ENCODE measurements at regions of chr9 and their contacts with region 1.

Region 1: DNA sequence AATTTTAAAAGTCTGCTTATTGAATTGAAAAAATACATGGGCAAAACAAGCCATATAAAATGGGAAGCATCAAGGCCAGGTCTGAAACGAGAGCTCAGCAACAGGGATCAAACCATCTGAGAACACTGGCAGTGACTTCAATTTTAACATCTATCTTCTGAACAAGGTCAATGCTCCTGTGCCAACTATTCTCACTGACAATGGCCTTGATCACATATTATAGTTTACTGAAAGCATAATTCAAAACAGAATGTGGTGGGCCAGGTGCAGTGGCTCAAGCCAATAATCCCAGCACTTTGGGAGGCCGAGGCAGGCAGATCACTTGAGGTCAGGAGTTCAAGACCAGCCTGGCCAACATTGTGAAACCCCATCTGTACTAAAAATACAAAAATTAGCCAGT is 9.0 kb downstream of the ECPAS start:
- DNase-seq: no peak
- ATAC-seq: peak; percentile 39 to 64 (median 46)
- H3K4me3 ChIP-seq: peak overlapping the region; percentile 29
- H3K27ac ChIP-seq: peak overlapping the region; percentile 47
- H3K4me1 ChIP-seq: peaks cover 91% of the 10 kb centered on the region
- H3K27me3 ChIP-seq: no peaks in the 10 kb centered on the region
- CTCF ChIP-seq: no peak

Region 2: GRCh38 chr9:111440226-111440625 is 35.0 kb before region 1 on chr9:
- intact Hi-C with region 1: loop called (anchors 5 kb)
- DNase-seq: no peak
- ATAC-seq: no peak
- H3K4me3 ChIP-seq: no peak overlapping the region
- H3K27ac ChIP-seq: no peak overlapping the region
- H3K4me1 ChIP-seq: no peaks in the 10 kb centered on the region
- H3K27me3 ChIP-seq: no peaks in the 10 kb centered on the region
- CTCF ChIP-seq: no peak

Region 3: DNA sequence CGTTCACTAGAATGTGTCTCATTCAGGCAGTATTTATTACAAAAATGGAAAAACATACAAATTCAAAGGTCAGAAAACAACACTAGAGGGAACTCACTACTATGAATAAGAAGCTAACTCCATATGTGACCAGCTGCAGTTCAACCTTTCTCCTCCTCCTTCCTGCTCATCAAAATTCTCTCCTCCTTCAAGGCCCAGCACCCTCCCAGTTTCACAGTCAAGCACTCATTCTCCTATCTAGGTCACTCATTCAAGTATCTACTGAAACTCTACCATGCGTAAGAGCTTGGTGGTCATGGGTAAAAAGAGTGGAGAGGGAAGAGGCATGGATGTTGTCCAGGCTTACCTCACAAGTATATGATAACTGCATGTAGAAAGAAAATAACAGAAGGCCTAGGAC is 18.7 kb before region 1 on chr9:
- intact Hi-C with region 1: no loop called
- DNase-seq: no peak
- ATAC-seq: peak; percentile 67 to 78 (median 71)
- H3K4me3 ChIP-seq: no peak overlapping the region
- H3K27ac ChIP-seq: peak overlapping the region; percentile 46
- H3K4me1 ChIP-seq: peaks cover 82% of the 10 kb centered on the region
- H3K27me3 ChIP-seq: no peaks in the 10 kb centered on the region
- CTCF ChIP-seq: no peak

Region 4: DNA sequence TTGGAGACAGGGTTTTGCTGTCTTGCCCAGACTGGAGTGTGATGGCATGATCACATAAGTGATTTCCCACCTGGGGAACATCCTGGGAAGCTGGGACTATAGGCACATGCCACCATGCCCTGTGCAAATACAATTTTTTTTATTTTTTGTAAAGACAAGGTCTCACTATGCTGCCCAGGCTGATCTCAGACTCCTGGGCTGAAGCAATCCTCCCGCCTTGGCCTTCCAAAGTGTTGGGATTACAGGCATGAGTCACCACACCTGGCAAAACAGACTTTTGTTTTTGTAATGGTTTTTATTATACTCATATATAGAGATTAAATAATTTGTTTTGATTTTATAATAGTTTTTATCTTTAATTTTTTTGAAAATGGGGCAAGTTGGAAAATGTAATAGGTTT is 170.6 kb after region 1 on chr9:
- intact Hi-C with region 1: no loop called
- DNase-seq: no peak
- ATAC-seq: no peak
- H3K4me3 ChIP-seq: no peak overlapping the region
- H3K27ac ChIP-seq: no peak overlapping the region
- H3K4me1 ChIP-seq: no peaks in the 10 kb centered on the region
- H3K27me3 ChIP-seq: no peaks in the 10 kb centered on the region
- CTCF ChIP-seq: no peak

Measured in psoas muscle (tissue), 8 donors.